BJ (cell line): ENCODE measurements at regions of chr4 and their contacts with region 1.

Region 1: DNA sequence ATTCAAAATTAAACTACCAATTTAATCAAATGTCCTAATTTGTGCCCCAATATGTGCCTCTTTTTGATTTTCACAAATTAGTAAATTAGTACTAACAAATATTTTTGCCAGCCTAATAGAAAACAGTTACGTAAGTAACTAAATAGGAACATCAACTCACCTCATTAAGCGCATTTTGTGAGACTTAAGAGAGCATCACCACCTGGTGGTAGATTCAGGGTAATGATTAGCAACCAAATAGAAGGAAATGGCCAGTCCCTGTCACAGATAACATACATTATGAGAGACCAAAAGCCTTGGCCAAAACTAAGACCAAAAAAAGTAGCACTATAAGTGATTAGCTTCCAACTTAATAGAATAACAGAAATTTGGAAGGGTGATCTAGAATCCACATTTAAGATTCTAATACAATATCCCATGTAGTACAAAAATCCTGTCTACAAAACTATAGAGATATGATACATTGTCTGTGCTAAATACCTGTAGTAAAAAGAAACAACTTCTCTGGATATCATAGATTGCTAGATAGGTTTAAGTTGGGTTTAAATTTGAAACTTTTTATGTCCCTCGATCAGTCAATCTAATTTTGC is 46.7 kb downstream of the C4orf46 start:
- DNase-seq: no peak
- H3K4me3 ChIP-seq: no peak overlapping the region
- H3K27me3 ChIP-seq: no peaks in the 10 kb centered on the region
- CTCF ChIP-seq: peak; percentile 77

Region 2: GRCh38 chr4:158259955-158260575 is 364.9 kb before region 1 on chr4:
- CTCF ChIA-PET with region 1: interaction called, 29 read pairs
- POLR2A ChIA-PET with region 1: no interaction called
- DNase-seq: no peak
- H3K4me3 ChIP-seq: no peak overlapping the region
- H3K27me3 ChIP-seq: no peaks in the 10 kb centered on the region
- CTCF ChIP-seq: peak; percentile 17; the same call in 1 of the 2 replicates

Region 3: DNA sequence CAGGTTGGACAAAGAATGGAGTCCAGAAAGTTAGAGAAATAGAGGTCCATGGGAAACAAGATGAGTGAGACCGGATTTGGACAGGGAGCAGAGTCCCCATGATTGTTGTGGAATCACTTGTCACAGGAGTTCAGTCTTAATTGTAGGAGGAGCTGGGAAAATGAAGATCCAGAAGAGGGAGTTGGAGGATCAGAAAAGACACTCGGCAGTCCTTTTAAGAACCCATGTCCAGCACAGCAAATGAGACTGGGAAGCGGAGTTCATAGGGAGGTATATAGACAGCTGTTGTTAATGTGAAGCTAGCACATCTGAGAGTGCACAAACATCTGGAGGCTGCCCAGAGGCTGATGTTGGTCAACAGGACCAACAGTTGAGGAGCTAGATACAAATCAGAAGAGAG is 214.7 kb before region 1 on chr4:
- CTCF ChIA-PET with region 1: interaction called, 27 read pairs
- POLR2A ChIA-PET with region 1: no interaction called
- DNase-seq: no peak
- H3K4me3 ChIP-seq: no peak overlapping the region
- H3K27me3 ChIP-seq: no peaks in the 10 kb centered on the region
- CTCF ChIP-seq: peak; percentile 34